Tibial artery (tissue), 4 donors: ENCODE measurements at regions of chr17 and their contacts with region 1.

Region 1: DNA sequence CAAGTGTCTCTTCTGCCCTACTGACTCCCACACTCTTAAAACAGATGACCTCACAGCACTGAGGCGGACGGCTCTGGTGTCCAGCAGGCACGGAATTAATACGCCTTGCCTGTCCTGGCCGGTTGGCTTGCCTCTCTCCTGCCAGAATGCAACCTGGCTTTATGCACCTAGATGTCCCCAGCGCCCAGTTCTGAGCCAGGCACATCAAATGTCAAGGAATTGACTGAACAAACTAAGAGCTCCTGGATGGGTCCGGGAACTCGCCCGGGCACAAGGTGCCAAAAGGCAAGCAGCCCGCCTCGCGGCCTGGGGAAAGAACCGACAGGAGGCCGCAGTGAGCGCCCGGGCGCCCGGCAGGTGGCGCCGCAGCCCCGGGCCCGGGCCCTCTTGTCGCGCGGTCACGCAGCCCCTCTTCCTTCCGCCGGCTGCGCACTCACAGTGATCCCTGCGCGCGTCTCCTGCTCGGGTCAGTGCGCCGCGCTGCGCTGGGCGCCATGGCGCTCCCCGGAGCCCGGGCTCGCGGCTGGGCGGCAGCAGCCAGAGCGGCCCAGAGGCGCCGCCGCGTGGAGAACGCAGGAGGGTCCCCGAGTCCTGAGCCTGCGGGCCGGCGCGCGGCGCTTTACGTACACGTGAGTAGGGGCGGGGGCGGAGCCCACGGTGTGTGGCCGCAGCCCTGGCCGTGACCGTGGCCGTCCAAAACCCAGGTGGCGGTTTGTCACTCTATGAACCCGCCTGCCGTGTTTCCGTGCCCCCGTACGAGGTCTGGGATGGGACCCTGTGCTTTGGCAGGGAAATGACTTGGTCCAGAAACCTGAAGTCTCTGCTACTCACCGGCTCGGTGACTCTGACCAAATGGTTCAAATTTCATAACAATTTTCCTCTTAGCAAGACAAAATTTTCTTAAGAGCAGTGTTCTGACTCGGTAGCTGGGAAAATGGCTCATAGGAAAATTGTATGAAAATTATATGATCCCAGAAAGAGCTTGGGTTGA is at the start of gene RSAD1:
- DNase-seq: peak; percentile 80 to 91
- H3K4me3 ChIP-seq: peak within 1 kb of the TSS; percentile 72 to 80
- H3K27ac ChIP-seq: peak within 1 kb of the TSS; percentile 91 to 94
- H3K4me1 ChIP-seq: peaks cover 0 to 38% (median 24%) of the 10 kb centered on the region in 4 donors
- H3K27me3 ChIP-seq: peaks cover 0 to 8% of the 10 kb centered on the region in 2 donors
- CTCF ChIP-seq: peak; percentile 89 to 93

Region 2: DNA sequence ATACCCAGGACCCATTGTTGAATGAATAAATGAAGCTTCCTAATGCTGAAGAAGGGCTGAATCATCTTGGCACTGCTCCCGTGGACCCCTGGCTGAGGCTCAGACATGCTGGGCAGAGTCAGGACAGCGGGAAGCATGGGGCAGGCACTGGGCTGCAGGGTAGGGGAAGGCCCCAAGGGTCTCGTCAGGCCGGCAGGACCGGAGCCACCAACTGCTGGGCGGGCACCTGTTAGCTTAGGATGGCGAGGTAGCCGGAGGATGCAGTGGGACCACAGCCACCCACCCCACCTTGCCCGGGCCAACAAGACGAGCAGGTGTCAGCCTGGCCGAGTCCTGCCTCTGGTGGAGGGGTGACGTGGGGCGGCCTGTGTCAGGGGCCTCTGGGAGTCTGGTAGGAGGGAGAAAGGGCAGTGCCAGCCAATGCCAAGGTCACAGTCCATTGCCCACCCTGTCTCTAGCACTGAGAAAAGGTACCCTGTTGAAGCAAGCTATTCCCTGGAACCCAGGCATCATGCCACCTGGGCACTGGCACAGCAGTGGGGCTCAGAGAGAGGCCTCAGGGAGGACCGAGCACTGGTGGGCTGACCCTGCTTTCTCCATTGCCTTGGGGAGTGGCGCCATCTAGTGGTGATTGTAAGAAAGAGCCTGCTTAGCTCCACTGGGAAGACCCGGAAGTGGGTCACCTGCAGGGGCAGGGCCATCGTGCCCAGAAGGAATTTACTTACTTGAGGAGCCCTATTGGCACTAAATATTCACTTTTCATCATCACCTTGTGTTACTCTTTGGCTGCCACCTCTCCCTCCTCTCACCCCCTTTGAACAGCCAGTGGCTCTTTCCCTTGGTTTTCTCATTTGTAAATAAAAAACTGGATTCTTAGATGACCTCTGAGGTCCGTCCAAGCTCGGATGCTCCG is 480.6 kb before region 1 on chr17:
- intact Hi-C with region 1: no loop called
- DNase-seq: peak; percentile 50 to 81
- H3K4me3 ChIP-seq: no peak overlapping the region
- H3K27ac ChIP-seq: no peak overlapping the region
- H3K4me1 ChIP-seq: peaks cover 0 to 42% (median 32%) of the 10 kb centered on the region in 4 donors
- H3K27me3 ChIP-seq: peaks cover 4 to 83% of the 10 kb centered on the region in 2 donors
- CTCF ChIP-seq: peak; percentile 90 to 91

Region 3: DNA sequence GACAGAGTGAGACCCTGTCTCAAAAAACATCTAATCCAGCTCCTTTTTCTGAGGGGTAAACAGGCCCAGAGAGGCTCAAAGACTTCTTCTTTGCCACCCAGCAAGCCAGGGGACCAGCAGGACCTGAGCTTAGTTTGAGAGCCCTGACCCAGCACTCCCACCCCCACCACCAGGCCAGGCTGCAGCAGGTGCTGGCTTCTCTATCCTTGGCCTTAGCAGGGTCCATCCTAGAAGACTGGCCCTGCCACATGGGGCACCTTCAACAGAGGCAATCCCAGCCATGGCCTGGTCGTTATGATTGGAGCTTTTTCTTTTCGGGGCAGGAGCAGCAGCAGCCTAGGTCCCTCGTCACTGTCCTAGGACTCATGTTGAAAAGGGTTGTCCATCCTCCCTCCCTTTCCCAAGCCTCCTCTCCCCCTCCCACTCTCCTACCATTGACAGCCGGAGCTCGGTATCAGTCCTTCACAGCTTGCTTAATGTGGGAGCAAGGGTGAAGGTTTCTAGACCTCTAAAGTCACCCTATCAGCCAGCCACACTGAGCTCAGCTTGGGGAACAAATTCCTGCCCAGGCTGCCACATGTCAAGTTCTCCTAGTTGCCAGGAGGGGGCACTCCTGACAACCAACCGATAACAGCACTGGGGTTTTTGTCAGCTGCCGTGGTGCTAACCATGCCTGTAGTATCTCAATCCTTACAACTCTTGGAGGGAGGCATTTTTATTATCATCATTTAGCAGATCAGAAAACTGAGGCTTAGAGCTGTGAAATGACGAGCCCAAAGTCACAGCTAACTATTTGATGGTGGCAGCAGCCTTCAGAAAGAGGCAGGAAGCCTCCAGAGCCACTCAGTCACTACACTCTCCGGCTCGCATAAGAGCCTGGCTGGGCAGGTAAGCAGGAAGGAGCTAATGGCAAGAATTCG is 116.9 kb before region 1 on chr17:
- intact Hi-C with region 1: loop called (anchors 10 kb)
- DNase-seq: peak in 1 of 2 donors; percentile 55
- H3K4me3 ChIP-seq: no peak overlapping the region
- H3K27ac ChIP-seq: peak overlapping the region in 1 of 2 donors; percentile 41
- H3K4me1 ChIP-seq: peaks cover 0 to 8% (median 3%) of the 10 kb centered on the region in 4 donors
- H3K27me3 ChIP-seq: no peaks in the 10 kb centered on the region
- CTCF ChIP-seq: peak; percentile 56 to 63

Region 4: GRCh38 chr17:50443368-50443971 is 35.2 kb before region 1 on chr17:
- intact Hi-C with region 1: no loop called
- DNase-seq: no peak
- H3K4me3 ChIP-seq: no peak overlapping the region
- H3K27ac ChIP-seq: no peak overlapping the region
- H3K4me1 ChIP-seq: peaks cover 0 to 23% (median 4%) of the 10 kb centered on the region in 4 donors
- H3K27me3 ChIP-seq: no peaks in the 10 kb centered on the region
- CTCF ChIP-seq: no peak

Region 5: DNA sequence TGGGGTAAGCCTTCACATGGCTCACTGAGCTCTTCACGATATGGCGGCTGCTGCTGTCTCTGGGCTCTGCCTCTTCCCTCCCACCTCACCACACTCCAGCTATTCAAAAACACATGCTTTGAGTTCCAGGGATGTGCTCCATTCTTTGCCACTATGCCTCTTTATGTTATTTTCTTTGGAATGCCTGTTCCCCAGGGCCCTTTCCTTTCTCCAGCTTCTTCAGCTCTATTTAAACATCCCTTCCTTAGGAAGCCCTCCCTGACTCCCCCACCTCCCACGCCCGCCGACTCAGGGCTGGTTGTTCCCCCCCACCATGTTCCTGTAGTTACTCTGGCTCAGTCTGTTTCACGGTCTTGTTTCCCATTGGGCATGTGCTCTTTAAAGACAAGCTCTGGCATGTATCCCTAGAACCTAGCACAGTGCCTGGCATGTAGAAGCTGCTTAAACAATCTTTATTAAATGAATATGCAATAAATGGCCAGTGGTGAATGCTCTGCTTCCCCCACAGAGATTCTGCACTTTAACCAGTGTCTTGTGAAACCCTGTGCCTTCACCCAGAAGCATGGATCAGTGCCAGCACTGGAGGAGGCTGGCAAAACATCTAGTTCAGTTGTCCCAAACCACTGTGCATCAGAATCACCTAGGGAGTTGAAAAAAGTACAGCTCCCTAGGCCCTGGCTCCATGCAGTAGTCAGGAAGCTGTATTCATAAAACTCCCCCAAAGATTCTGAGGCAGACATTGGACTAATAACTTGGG is 36.4 kb after region 1 on chr17:
- intact Hi-C with region 1: no loop called
- DNase-seq: peak in 1 of 2 donors; percentile 57
- H3K4me3 ChIP-seq: no peak overlapping the region
- H3K27ac ChIP-seq: no peak overlapping the region
- H3K4me1 ChIP-seq: peaks cover 0 to 6% (median 0%) of the 10 kb centered on the region in 4 donors
- H3K27me3 ChIP-seq: no peaks in the 10 kb centered on the region
- CTCF ChIP-seq: no peak

Region 6: DNA sequence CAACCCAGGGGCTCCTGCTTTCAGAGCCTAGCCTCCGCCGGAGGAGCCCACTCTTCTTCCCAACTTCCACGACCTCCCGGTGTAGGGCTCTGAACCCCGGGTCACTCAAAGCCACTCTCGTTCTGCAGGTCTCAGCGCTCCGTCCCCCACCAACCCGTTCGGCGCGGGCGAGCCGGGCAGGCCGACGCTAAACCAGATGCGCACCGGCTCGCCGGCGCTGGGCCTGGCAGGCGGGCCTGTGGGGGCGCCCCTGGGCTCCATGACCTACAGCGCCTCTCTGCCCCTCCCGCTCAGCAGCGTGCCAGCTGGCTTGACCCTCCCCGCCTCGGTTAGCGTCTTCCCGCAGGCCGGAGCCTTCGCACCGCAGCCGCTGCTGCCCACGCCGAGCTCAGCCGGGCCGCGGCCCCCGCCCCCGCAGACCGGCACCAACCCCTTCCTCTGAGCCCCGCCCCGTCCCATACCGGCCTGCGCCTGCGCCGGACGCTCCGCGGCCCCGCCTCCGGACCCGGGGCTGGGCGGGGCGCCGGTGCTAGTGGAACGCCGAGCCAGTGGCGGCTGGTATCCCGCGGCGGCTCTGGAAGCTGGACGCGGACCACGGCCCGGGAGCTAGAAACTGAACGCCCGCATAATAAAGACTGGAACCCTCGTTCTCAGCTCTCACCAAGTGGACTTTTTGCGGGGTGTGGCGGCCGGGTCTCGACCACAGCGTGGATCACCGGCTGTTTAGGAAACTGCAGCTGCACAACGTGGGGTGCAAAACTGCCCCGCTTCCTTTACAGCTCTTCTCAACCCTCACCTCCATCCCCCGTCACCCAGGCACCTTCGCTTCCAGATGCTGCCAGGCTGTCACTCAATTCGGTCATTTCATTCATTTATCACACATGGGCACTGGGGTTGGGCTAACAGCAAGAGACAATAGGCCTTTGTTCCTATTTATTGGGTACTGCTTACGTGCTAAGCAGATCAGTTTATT is 63.3 kb after region 1 on chr17:
- intact Hi-C with region 1: loop called (anchors 5 kb)
- DNase-seq: peak; percentile 85 to 90
- H3K4me3 ChIP-seq: peak overlapping the region; percentile 63 to 64
- H3K27ac ChIP-seq: peak overlapping the region; percentile 29 to 65
- H3K4me1 ChIP-seq: peaks cover 7 to 30% (median 17%) of the 10 kb centered on the region in 4 donors
- H3K27me3 ChIP-seq: no peaks in the 10 kb centered on the region
- CTCF ChIP-seq: peak in 1 of 2 experiments; percentile 12

Region 7: GRCh38 chr17:50630524-50631194 is 152.0 kb after region 1 on chr17:
- intact Hi-C with region 1: loop called (anchors 2 kb)
- DNase-seq: no peak
- H3K4me3 ChIP-seq: no peak overlapping the region
- H3K27ac ChIP-seq: no peak overlapping the region
- H3K4me1 ChIP-seq: peaks cover 0 to 31% (median 24%) of the 10 kb centered on the region in 4 donors
- H3K27me3 ChIP-seq: peaks cover 0 to 35% of the 10 kb centered on the region in 2 donors
- CTCF ChIP-seq: peak; percentile 74 to 80

Region 8: GRCh38 chr17:50640701-50641351 is 162.1 kb after region 1 on chr17:
- intact Hi-C with region 1: no loop called
- DNase-seq: peak in 1 of 2 donors; percentile 54
- H3K4me3 ChIP-seq: no peak overlapping the region
- H3K27ac ChIP-seq: no peak overlapping the region
- H3K4me1 ChIP-seq: peaks cover 0 to 59% (median 49%) of the 10 kb centered on the region in 4 donors
- H3K27me3 ChIP-seq: no peaks in the 10 kb centered on the region
- CTCF ChIP-seq: no peak

Region 9: GRCh38 chr17:50681263-50682210 is 202.9 kb after region 1 on chr17:
- intact Hi-C with region 1: loop called (anchors 10 kb)
- DNase-seq: peak; percentile 59 to 70
- H3K4me3 ChIP-seq: no peak overlapping the region
- H3K27ac ChIP-seq: no peak overlapping the region
- H3K4me1 ChIP-seq: peaks cover 0 to 20% (median 9%) of the 10 kb centered on the region in 4 donors
- H3K27me3 ChIP-seq: no peaks in the 10 kb centered on the region
- CTCF ChIP-seq: peak; percentile 53 to 72